ENCODE measurements at regions of chr20 and their contacts with region 1.

Region 1: DNA sequence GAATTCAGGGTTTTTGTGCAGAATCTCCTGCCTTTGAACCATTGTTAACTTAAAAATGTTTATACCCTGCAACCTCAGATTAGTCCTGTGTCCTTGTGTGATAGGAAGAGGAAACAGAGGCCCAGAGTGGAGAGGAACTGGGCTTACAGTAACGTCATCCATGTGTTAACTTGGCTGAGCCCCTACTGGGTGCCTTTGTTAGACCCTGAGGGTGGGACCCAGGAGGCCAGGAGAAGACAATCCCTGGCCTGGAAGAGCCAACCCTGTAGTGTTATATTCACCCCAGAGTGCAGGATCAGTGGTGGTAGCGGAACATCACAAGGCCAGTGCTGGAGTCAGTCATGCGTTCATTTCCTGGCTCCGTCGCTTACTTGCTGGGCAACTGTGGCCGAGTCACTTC is 10.6 kb downstream of the MYLK2 start:
- DNase-seq: no peak
- H3K4me3 ChIP-seq: no peak overlapping the region
- H3K27ac ChIP-seq: no peak overlapping the region
- H3K4me1 ChIP-seq: peaks cover 0 to 5% (median 5%) of the 10 kb centered on the region in 4 experiments; a peak in 5 of 7 replicates
- H3K27me3 ChIP-seq: no peaks in the 10 kb centered on the region
- CTCF ChIP-seq: no peak
- EP300 ChIP-seq: no peak
- POLR2A ChIP-seq: no peak
- RAD21 ChIP-seq: no peak

Region 2: GRCh38 chr20:31842471-31843157 is 12.9 kb after region 1 on chr20:
- CTCF ChIA-PET with region 1: interaction called, 111 read pairs
- POLR2A ChIA-PET with region 1: no interaction called
- DNase-seq: no peak
- H3K4me3 ChIP-seq: no peak overlapping the region
- H3K27ac ChIP-seq: no peak overlapping the region
- H3K4me1 ChIP-seq: peaks cover 4 to 38% (median 32%) of the 10 kb centered on the region in 4 experiments
- H3K27me3 ChIP-seq: peaks cover 0 to under 1% (median 0%) of the 10 kb centered on the region in 4 experiments; a peak in 1 of 7 replicates
- CTCF ChIP-seq: no peak
- EP300 ChIP-seq: no peak
- POLR2A ChIP-seq: no peak
- RAD21 ChIP-seq: no peak